HEK293 (cell line): ENCODE measurements at regions of chr11 and their contacts with region 1.

Region 1: DNA sequence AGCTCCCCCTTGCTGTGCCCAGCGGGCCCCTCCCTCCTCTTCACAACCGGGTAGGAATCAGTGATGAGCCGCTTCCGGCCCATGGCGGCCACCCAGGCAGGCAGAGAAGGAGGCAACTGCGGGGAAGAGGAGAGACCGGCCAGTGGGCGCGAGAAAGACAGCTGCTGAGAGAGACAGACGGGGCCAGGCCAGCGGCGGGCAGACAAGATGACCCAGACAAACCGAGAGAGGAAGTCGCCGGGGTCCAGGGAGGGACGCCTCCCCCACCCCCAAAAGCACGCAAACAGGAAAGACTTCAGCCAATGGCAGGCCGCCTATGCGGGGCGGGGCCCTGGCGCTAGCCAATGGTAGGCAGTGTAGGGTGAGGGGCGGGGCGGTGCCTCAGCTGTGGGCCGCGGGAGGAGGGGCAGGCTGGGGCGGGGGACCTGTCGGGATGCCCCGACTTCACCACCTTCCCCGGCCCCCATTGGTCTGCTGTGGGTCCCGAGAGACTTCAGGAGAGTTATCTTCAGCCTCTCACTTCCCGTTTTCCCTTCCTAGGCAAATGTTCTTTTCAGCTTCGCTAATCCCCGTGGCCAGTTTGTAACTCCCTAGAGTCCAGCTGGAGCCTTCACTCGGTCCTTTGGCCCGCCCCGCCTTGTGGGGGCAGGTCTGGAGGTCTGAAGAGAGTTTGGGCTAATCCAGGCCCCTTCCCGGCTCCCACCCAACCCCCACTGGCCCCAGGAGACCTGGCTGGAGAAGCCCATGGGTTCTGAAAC is at the start of gene POLD4:
- H3K4me3 ChIP-seq: peak within 1 kb of the TSS; percentile 72
- H3K27ac ChIP-seq: peak within 1 kb of the TSS; percentile 59
- H3K4me1 ChIP-seq: no peaks in the 10 kb centered on the region
- CTCF ChIP-seq: no peak

Region 2: GRCh38 chr11:67332081-67332691 is 21.3 kb before region 1 on chr11:
- CTCF ChIA-PET with region 1: interaction called, 39 read pairs
- POLR2A ChIA-PET with region 1: interaction called, 5 read pairs
- H3K4me3 ChIP-seq: no peak overlapping the region
- H3K27ac ChIP-seq: no peak overlapping the region
- H3K4me1 ChIP-seq: no peaks in the 10 kb centered on the region
- CTCF ChIP-seq: no peak

Region 3: GRCh38 chr11:67337257-67337656 is 16.2 kb before region 1 on chr11:
- CTCF ChIA-PET with region 1: interaction called, 39 read pairs
- POLR2A ChIA-PET with region 1: interaction called, 12 read pairs
- H3K4me3 ChIP-seq: no peak overlapping the region
- H3K27ac ChIP-seq: no peak overlapping the region
- H3K4me1 ChIP-seq: no peaks in the 10 kb centered on the region
- CTCF ChIP-seq: no peak

Region 4: DNA sequence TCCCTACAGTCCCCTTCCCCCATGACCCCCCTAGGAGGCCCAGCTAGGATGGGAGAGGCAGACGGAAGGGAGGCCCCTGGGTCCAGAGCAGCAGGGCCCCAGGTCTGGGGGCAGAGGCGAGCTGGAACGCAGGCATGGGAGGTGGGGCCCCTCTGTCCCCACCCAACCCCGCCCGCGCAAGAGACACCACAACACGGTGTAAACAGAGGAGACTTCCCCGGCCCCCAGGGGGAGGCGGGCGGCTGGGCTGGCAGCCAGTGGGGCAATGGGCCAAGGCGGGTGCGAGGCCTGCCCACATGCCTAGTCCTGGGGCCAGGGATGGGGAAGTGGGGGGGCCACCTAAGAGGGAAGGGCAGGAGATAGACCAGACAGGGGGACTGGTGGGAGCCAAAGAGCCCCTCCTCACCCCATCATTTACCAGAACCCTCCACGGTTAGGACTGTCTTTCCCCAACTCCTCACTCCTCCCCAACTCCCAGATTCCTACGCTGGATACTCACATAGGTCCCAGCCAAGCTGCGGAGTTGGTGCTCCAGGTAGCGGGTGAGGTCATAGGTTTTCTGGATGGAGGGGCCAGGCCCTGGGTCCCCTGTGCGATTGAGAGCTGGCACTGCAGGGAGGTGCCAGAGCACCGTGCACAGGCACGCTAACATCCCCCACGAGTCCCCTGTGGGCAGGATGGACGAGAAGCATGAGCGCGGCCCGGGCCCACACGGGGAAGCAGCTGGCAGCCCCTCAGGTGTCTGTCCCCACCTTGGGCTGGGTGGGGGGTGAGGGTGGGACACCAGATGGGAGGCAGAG is 13.7 kb after region 1 on chr11:
- CTCF ChIA-PET with region 1: interaction called, 898 read pairs
- POLR2A ChIA-PET with region 1: interaction called, 30 read pairs
- H3K4me3 ChIP-seq: no peak overlapping the region
- H3K27ac ChIP-seq: no peak overlapping the region
- H3K4me1 ChIP-seq: no peaks in the 10 kb centered on the region; the same call in 1 of the 2 replicates
- CTCF ChIP-seq: no peak

Region 5: DNA sequence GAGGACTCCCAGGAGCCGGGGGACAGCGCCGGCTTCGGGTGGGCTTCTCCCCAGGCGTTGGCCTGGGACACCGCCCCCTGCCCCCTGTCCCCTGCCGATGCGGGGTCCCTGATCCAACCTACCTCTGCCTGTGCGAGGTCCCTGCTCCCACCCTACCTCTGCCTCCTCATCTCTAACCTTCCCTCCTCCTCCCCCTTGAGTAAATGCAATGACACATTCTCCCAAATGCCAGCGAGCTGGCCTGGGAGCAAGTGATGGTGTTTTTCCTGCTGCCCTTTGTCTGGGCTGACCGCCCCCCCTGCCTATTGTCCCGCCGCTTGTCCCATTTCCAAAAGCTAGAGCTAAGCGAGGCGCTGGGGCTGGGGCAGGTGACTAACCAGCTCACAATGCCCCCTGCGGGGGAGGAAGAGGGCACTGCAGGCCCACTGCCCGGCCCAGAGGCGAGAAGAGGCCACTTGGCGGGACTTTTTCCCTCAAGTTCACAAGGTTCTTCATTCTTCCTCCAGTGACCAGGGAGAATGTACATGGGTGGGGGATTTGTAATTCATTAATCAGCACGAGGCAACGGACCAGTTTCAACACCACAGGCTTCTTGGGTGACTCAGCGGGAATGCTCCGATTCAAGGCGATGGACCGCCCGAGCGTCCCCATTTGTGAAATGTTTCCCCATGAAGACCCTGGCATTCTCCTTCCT is 20.6 kb after region 1 on chr11:
- CTCF ChIA-PET with region 1: interaction called, 898 read pairs
- POLR2A ChIA-PET with region 1: interaction called, 30 read pairs
- H3K4me3 ChIP-seq: peak overlapping the region; percentile 57
- H3K27ac ChIP-seq: no peak overlapping the region
- H3K4me1 ChIP-seq: peaks cover 3% of the 10 kb centered on the region; the same call in 1 of the 2 replicates
- CTCF ChIP-seq: peak; percentile 43; the same call in 1 of the 2 replicates

Region 6: GRCh38 chr11:67382276-67383136 is 29.0 kb after region 1 on chr11:
- CTCF ChIA-PET with region 1: interaction called, 898 read pairs
- POLR2A ChIA-PET with region 1: interaction called, 15 read pairs
- H3K4me3 ChIP-seq: no peak overlapping the region
- H3K27ac ChIP-seq: no peak overlapping the region
- H3K4me1 ChIP-seq: no peaks in the 10 kb centered on the region
- CTCF ChIP-seq: peak; percentile 92

Region 7: DNA sequence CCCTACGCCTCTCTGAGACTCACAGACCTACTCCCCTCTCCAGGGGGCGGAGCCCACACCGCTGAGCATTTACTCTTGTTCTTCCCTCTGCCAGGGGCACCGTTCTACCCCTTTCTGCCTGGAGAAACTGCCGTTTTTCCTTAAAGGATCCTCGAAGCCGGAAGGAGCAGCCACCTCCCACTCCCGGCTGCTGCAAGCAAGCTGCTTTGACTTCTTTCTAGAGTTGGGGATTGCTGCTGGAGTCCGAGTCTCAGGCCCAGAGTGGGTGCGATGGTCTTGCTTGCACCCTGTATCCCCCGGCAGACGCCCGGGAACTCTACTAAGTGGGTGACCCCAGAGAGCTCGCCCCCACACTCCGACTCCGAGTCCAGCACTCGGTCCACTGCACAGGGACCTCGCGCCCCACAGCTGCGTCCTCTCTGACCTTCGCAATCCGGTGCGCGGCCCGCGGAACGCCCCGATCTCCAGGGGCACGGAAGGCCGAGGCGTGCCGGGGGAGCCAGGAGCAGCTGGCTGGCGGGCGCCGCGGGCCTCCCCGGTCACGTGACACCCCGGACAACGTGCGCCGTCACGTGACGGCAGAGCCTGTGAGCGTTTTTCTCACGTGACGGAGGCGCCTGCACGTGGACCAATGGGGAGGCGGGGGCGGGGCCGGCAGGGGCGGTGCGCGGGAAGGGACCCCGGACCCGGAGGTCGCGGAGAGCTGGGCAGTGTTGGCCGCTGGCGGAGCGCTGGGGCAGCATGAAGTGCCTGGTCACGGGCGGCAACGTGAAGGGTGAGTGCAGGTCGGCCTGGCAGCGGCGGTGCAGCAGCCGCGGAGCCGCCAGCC is 38.0 kb after region 1 on chr11 and contains the start of gene RAD9A:
- CTCF ChIA-PET with region 1: interaction called, 898 read pairs
- POLR2A ChIA-PET with region 1: interaction called, 23 read pairs
- H3K4me3 ChIP-seq: peak within 1 kb of the TSS; percentile 76
- H3K27ac ChIP-seq: peak within 1 kb of the TSS; percentile 67
- H3K4me1 ChIP-seq: 0 out of 2 replicates have a peak, but pooled peaks cover 3% of the 10 kb centered on the region
- CTCF ChIP-seq: no peak; the same call in 1 of the 2 replicates